ENCODE measurements at regions of chr3 and their contacts with region 1.

Region 1: GRCh38 chr3:54374214-54374855 is 252.0 kb downstream of the CACNA2D3 start:
- DNase-seq: peak; percentile 52
- H3K4me3 Mint-ChIP-seq: no peak overlapping the region
- H3K27ac Mint-ChIP-seq: no peak overlapping the region
- H3K4me1 Mint-ChIP-seq: no peaks in the 10 kb centered on the region
- H3K27me3 Mint-ChIP-seq: peaks cover 51% of the 10 kb centered on the region
- CTCF ChIP-seq: no peak

Region 2: DNA sequence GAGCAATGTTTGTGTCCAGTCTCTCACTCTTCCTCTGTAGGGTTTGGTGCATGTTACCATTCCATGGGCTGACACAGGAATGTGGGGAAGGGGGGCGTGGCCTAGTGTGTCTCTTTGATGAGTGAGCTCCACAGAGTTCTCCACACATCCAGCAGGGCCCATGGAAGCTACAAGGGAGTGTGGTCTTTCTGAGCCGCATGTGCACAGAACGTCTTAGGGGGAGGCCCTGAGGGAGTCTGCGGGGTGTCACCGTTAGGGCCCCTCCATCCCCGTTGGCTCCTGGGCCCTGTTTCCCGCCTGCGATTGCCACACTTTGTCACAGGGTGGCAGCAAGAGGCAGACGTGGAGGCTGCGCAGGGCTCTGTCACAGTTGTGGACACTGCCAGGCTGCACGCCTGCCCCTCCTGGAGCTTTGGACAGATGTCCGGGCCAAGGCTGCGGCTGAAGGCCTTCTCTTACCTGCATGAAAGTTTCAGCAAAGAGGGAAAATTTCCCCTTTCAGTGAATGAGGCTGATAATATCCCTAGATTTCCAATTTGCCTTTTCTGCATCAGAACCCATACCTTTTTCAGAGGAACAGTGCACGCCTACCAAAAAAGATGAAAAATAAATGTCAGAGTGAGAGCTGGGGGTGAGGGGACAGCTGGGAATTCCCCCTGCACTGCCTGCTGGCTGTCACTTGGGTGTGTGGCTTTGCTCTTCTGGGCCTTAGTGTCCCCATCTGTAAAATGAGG is 227.7 kb before region 1 on chr3:
- CTCF ChIA-PET with region 1: interaction called, 26 read pairs
- intact Hi-C with region 1: loop called (anchors 1 kb)
- DNase-seq: peak; percentile 63
- H3K4me3 Mint-ChIP-seq: no peak overlapping the region
- H3K27ac Mint-ChIP-seq: no peak overlapping the region
- H3K4me1 Mint-ChIP-seq: no peaks in the 10 kb centered on the region
- H3K27me3 Mint-ChIP-seq: peaks cover 67% of the 10 kb centered on the region
- CTCF ChIP-seq: peak; percentile 47

Region 3: GRCh38 chr3:54243056-54243931 is 131.0 kb before region 1 on chr3:
- CTCF ChIA-PET with region 1: no interaction called
- intact Hi-C with region 1: loop called (anchors 10 kb)
- DNase-seq: peak; percentile 1
- H3K4me3 Mint-ChIP-seq: no peak overlapping the region
- H3K27ac Mint-ChIP-seq: no peak overlapping the region
- H3K4me1 Mint-ChIP-seq: no peaks in the 10 kb centered on the region
- H3K27me3 Mint-ChIP-seq: no peaks in the 10 kb centered on the region
- CTCF ChIP-seq: no peak